MCF 10A (cell line): ENCODE measurements at regions of chr5 and their contacts with region 1.

Region 1: GRCh38 chr5:16855485-16855884 is 80.6 kb downstream of the MYO10 start:
- DNase-seq: no peak
- H3K4me3 Mint-ChIP-seq: no peak overlapping the region
- H3K27ac Mint-ChIP-seq: no peak overlapping the region
- H3K4me1 Mint-ChIP-seq: peaks cover 10% of the 10 kb centered on the region
- H3K27me3 Mint-ChIP-seq: no peaks in the 10 kb centered on the region
- CTCF ChIP-seq: no peak

Region 2: GRCh38 chr5:16744164-16744880 is 111.2 kb before region 1 on chr5:
- CTCF ChIA-PET with region 1: no interaction called
- POLR2A ChIA-PET with region 1: no interaction called
- intact Hi-C with region 1: no loop called
- DNase-seq: peak; percentile 57
- H3K4me3 Mint-ChIP-seq: no peak overlapping the region
- H3K27ac Mint-ChIP-seq: no peak overlapping the region
- H3K4me1 Mint-ChIP-seq: no peaks in the 10 kb centered on the region
- H3K27me3 Mint-ChIP-seq: no peaks in the 10 kb centered on the region
- CTCF ChIP-seq: no peak

Region 3: GRCh38 chr5:16784088-16784487 is 71.4 kb before region 1 on chr5:
- CTCF ChIA-PET with region 1: no interaction called
- POLR2A ChIA-PET with region 1: no interaction called
- intact Hi-C with region 1: no loop called
- DNase-seq: no peak
- H3K4me3 Mint-ChIP-seq: no peak overlapping the region
- H3K27ac Mint-ChIP-seq: no peak overlapping the region
- H3K4me1 Mint-ChIP-seq: peaks cover 25% of the 10 kb centered on the region
- H3K27me3 Mint-ChIP-seq: no peaks in the 10 kb centered on the region
- CTCF ChIP-seq: no peak

Region 4: GRCh38 chr5:16842896-16843295 is 12.6 kb before region 1 on chr5:
- CTCF ChIA-PET with region 1: interaction called, 26 read pairs
- POLR2A ChIA-PET with region 1: interaction called, 3 read pairs
- intact Hi-C with region 1: no loop called
- DNase-seq: no peak
- H3K4me3 Mint-ChIP-seq: no peak overlapping the region
- H3K27ac Mint-ChIP-seq: no peak overlapping the region
- H3K4me1 Mint-ChIP-seq: no peaks in the 10 kb centered on the region
- H3K27me3 Mint-ChIP-seq: no peaks in the 10 kb centered on the region
- CTCF ChIP-seq: no peak

Region 5: DNA sequence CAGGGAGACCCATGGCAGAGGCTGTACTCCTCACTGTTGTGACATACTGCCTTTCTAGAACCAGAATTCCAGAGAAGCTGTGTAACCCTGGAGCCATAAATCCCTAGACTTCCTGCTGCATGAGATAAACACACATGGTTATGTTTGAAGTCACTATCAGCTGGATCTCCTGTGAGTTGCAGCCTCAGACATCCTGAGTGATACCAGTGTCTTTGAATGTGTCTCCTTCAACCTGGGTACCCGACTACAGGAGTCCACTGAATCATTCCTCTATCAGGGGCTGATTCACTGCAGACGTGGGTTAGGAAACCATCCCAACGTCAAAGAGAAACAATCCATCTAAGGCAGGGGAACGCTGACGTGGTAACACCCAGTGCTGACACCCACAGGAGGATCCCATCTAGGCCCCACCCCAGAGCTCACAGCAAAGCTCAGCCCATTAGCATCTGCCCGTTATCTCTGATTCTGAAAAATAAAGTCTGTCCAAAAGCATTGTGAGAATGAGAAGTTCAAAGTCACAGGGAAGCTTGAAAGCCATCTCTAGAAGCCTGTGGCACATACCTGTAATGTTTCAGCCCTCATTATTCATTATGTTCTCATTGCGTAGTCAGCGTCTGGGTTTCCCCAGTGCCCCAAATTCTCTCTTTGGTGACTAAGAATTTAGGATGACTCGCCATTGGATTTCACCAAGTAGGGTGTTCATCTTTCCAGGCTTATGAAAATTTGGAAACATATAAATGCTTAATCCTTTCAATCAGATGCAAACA is 325.7 kb after region 1 on chr5:
- CTCF ChIA-PET with region 1: no interaction called
- POLR2A ChIA-PET with region 1: no interaction called
- intact Hi-C with region 1: no loop called
- DNase-seq: peak; percentile 70
- H3K4me3 Mint-ChIP-seq: no peak overlapping the region
- H3K27ac Mint-ChIP-seq: peak overlapping the region; percentile 46
- H3K4me1 Mint-ChIP-seq: peaks cover 15% of the 10 kb centered on the region
- H3K27me3 Mint-ChIP-seq: no peaks in the 10 kb centered on the region
- CTCF ChIP-seq: no peak